Transverse colon (tissue), 4 donors: ENCODE measurements at regions of chr15 and their contacts with region 1.

Region 1: DNA sequence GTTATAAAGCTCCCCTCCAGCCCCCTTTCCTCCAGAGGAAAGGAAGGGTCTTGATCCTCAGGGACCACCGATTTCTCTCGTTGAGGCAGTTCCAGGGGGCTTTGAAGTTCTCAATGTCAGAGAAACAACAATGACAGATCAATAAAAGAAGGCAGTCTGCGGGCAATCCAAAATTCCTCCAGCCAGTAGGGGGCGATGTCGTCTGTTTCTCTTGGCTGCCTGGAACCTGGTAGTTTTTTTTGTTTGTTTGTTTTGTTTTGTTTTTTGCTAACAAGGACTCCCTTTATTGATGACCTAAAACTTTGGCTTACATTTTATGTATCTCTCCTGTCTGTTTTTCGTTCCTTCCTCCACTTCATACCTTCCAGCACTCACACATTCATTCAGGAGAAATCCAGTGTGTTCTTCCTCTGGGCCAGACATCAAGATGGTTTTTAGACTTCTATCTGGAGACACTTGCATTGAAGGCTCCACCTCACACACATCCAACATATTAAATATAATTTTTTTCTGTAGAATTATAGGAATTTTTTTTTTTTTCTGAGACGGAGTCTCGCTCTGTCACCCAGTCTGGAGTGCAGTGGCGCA is 276.6 kb downstream of the RPLP1 start:
- DNase-seq: peak; percentile 69
- H3K4me3 ChIP-seq: no peak overlapping the region
- H3K27ac ChIP-seq: no peak overlapping the region
- H3K4me1 ChIP-seq: no peaks in the 10 kb centered on the region
- H3K27me3 ChIP-seq: no peaks in the 10 kb centered on the region
- CTCF ChIP-seq: peak; percentile 70 to 80 (median 76)
- EP300 ChIP-seq: no peak
- POLR2A ChIP-seq: no peak

Region 2: DNA sequence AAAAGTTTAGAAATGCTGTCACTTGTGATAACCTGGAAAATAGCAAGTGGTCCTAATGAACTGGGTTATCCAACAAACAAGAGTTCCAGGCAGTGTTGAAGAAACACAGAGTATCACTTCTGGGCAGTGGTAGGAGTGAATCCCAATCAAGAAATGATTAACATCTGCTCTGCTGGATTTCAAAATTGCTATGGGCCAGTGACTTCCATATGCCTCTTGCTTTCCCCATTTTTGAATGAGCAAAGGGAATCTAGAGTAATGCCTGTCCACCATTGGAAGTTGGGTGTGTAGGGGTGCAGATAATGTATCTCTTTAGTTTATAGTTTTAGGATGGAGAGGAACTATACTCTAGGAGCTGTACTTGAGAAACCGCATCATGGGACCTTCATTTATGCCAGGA is 40.1 kb before region 1 on chr15:
- in situ Hi-C with region 1: no loop called
- intact Hi-C with region 1: loop called (anchors 1 kb)
- DNase-seq: no peak
- H3K4me3 ChIP-seq: no peak overlapping the region
- H3K27ac ChIP-seq: no peak overlapping the region
- H3K4me1 ChIP-seq: peaks cover 0 to 3% (median 0%) of the 10 kb centered on the region in 4 donors
- H3K27me3 ChIP-seq: no peaks in the 10 kb centered on the region
- CTCF ChIP-seq: no peak
- EP300 ChIP-seq: no peak
- POLR2A ChIP-seq: no peak